Esophagus squamous epithelium (tissue), 5 donors: ENCODE measurements at regions of chr3 and their contacts with region 1.

Region 1: GRCh38 chr3:9946112-9947024 is 5.8 kb downstream of the PRRT3 start:
- DNase-seq: peak; percentile 36
- H3K4me3 ChIP-seq: peak overlapping the region; percentile 42 to 75 (median 66)
- H3K27ac ChIP-seq: peak overlapping the region; percentile 76 to 92 (median 86)
- H3K4me1 ChIP-seq: peaks cover 9 to 40% (median 9%) of the 10 kb centered on the region in 3 donors
- H3K27me3 ChIP-seq: no peaks in the 10 kb centered on the region
- CTCF ChIP-seq: peak; percentile 54 to 88 (median 78)
- POLR2A ChIP-seq: peak in 2 of 4 donors; percentile 52 to 62

Region 2: DNA sequence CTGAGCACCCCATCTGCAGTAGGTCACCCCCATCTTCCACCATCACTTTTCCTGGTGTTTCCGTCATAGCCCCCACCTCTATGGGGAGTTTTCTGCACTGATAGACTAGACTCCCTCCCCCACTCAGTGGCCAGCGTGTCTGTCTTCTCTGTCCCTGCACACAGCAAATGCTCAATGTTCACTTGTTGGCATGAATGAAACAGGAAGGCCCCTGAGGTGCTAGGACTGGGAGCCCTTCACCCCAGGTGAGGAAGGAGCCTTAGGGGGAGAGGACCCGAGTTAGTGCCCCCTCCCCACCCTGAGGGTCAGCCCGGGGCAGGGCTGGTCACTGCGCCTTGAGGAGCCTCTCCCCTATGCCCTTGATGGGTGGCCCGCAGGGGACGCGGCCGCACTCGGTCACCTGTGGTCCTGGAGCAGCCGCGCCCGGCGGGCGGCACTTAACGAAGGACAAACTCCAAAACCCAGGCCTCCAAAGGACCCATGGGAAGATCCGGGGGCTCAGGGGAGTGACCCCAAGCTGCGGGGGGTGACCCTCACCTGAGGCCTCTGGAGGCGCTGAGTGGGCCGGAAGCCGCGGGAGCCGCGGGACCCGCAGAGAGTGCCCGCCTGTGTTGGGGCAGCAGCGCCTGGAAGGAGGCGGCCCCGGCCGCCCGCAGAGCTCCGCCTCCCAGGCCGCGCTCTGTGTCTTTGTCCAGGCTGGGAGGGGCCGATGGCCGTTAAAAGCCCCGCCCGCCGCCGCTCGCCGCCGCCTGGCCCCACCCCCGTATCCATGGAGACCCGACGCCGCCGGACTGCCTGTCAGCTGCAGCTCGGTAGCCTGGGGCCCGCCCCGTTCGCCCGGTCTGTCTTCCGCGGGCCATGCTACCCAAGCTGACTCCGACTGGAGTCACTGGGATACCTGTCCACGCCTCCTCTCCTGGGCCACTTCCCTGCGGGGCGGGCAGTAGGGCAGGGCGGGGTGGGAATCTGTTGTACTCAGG is 64.4 kb after region 1 on chr3:
- intact Hi-C with region 1: loop called (anchors 10 kb)
- DNase-seq: peak; percentile 82
- H3K4me3 ChIP-seq: peak overlapping the region; percentile 43 to 72 (median 68)
- H3K27ac ChIP-seq: peak overlapping the region; percentile 66 to 84 (median 78)
- H3K4me1 ChIP-seq: peaks cover 27 to 49% (median 29%) of the 10 kb centered on the region in 3 donors
- H3K27me3 ChIP-seq: no peaks in the 10 kb centered on the region
- CTCF ChIP-seq: no peak
- POLR2A ChIP-seq: peak in 1 of 4 donors; percentile 66